ENCODE measurements at regions of chr16 and their contacts with region 1.

Region 1: GRCh38 chr16:47299587-47299986 is 155.8 kb upstream of the NETO2 start:
- DNase-seq: no peak
- H3K4me3 ChIP-seq: no peak overlapping the region
- H3K27ac ChIP-seq: no peak overlapping the region
- H3K4me1 ChIP-seq: no peaks in the 10 kb centered on the region
- H3K27me3 ChIP-seq: no peaks in the 10 kb centered on the region
- CTCF ChIP-seq: no peak
- EP300 ChIP-seq: no peak
- POLR2A ChIP-seq: no peak

Region 2: DNA sequence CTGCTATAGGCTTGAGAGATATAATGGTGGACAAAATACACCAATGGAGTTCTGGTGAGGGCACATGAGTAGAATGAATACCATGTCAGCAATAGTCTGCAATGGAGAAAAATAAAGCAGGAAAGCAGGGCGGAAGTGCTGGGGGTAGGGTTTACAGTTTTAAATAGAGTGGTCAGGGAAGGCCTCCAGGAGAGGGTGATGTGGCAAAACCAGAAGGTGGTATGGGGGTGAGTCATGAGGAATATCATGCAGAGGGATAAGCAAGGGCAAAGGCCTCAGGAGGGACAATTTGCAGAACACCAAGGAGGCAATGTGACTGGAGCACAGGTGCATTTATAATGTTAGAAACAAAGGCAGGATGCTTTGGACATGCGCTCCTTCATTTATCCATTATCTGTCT is 59.2 kb after region 1 on chr16:
- intact Hi-C with region 1: no loop called
- DNase-seq: no peak
- H3K4me3 ChIP-seq: no peak overlapping the region
- H3K27ac ChIP-seq: no peak overlapping the region
- H3K4me1 ChIP-seq: no peaks in the 10 kb centered on the region
- H3K27me3 ChIP-seq: no peaks in the 10 kb centered on the region
- CTCF ChIP-seq: no peak
- EP300 ChIP-seq: no peak
- POLR2A ChIP-seq: no peak

Region 3: DNA sequence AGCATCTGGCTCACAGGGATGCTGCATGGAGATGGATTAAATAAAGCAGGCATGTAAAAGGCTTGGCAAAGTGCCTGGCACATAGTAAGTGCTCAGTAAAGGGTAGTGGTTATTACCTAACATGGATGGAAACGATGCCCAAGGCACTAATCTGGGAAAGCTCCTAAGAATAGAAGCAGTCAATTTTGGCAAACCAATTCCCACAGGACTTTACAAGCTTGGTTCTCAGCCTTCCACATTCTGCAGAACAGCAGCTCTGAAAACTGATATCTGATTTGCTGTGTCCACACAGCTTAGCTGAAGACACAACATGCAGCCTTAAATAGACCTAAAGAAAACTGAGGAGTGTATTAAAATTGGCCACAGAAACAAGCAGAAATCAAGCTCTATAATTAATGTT is 680.2 kb after region 1 on chr16:
- intact Hi-C with region 1: loop called (anchors 10 kb)
- DNase-seq: no peak
- H3K4me3 ChIP-seq: no peak overlapping the region
- H3K27ac ChIP-seq: no peak overlapping the region
- H3K4me1 ChIP-seq: no peaks in the 10 kb centered on the region
- H3K27me3 ChIP-seq: no peaks in the 10 kb centered on the region
- CTCF ChIP-seq: no peak
- EP300 ChIP-seq: no peak
- POLR2A ChIP-seq: no peak

Measured in stomach (tissue), 19 donors.